Heart right ventricle (tissue), 16 donors: ENCODE measurements at regions of chrX and their contacts with region 1.

Region 1: GRCh38 chrX:3638280-3638873 is 75.1 kb downstream of the PRKX start:
- DNase-seq: peak in 1 of 2 donors; percentile 11
- ATAC-seq: no peak
- H3K4me3 ChIP-seq: no peak overlapping the region
- H3K27ac ChIP-seq: no peak overlapping the region
- H3K4me1 ChIP-seq: no peaks in the 10 kb centered on the region
- H3K27me3 ChIP-seq: no peaks in the 10 kb centered on the region
- CTCF ChIP-seq: peak; percentile 22 to 75 (median 59)

Region 2: GRCh38 chrX:2875798-2876399 is 762.5 kb before region 1 on chrX:
- intact Hi-C with region 1: loop called in 1 of 10 experiments (anchors 10 kb)
- DNase-seq: no peak
- ATAC-seq: no peak
- H3K4me3 ChIP-seq: no peak overlapping the region
- H3K27ac ChIP-seq: no peak overlapping the region
- H3K4me1 ChIP-seq: no peaks in the 10 kb centered on the region
- H3K27me3 ChIP-seq: no peaks in the 10 kb centered on the region
- CTCF ChIP-seq: peak in 5 of 9 donors; percentile 8 to 40 (median 30)

Region 3: GRCh38 chrX:3119376-3119775 is 519.0 kb before region 1 on chrX:
- intact Hi-C with region 1: loop called in 4 of 10 experiments (anchors 10 kb)
- DNase-seq: no peak
- ATAC-seq: no peak
- H3K4me3 ChIP-seq: no peak overlapping the region
- H3K27ac ChIP-seq: no peak overlapping the region
- H3K4me1 ChIP-seq: no peaks in the 10 kb centered on the region
- H3K27me3 ChIP-seq: no peaks in the 10 kb centered on the region
- CTCF ChIP-seq: no peak

Region 4: GRCh38 chrX:3697701-3698279 is 59.4 kb after region 1 on chrX:
- intact Hi-C with region 1: no loop called
- DNase-seq: peak; percentile 22 to 25
- ATAC-seq: peak in 7 of 8 donors; percentile 68 to 92 (median 86)
- H3K4me3 ChIP-seq: peak overlapping the region in 1 of 10 donors; percentile 9
- H3K27ac ChIP-seq: peak overlapping the region in 7 of 10 donors; percentile 7 to 46 (median 40)
- H3K4me1 ChIP-seq: peaks cover 0 to 65% (median 3%) of the 10 kb centered on the region in 9 donors
- H3K27me3 ChIP-seq: no peaks in the 10 kb centered on the region
- CTCF ChIP-seq: no peak